Activated naive CD4-positive, alpha-beta T cell treated with anti-CD3 and anti-CD28 coated beads for 36 hours (primary cell): ENCODE measurements at regions of chr10 and their contacts with region 1.

Region 1: GRCh38 chr10:88657901-88658300 is 6.3 kb upstream of the LIPF start:
- DNase-seq: no peak
- H3K4me3 Mint-ChIP-seq: no peak overlapping the region
- H3K27ac Mint-ChIP-seq: no peak overlapping the region
- H3K4me1 Mint-ChIP-seq: no peaks in the 10 kb centered on the region
- H3K27me3 Mint-ChIP-seq: peaks cover 14% of the 10 kb centered on the region

Region 2: DNA sequence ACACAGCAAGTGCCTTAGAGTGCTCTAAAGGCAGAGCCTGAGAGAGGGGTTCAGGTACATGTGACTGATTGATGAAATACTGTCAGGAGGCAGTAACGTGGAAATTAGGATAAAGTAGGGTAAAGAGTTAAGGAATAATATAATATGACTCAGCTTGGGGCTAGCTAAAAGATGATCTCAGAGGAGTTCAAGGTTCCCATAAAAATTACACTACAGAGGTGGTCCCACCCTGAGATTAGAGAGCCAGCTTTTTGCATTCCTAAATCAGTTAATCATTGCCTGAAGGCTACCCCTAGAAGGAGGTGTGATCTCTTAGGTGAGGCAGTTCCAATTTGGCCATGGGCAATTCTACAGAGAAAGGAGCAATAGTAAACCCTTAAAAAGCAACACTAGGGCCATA is 65.5 kb before region 1 on chr10:
- CTCF ChIA-PET with region 1: no interaction called
- intact Hi-C with region 1: loop called (anchors 5 kb)
- DNase-seq: no peak
- H3K4me3 Mint-ChIP-seq: no peak overlapping the region
- H3K27ac Mint-ChIP-seq: no peak overlapping the region
- H3K4me1 Mint-ChIP-seq: no peaks in the 10 kb centered on the region
- H3K27me3 Mint-ChIP-seq: no peaks in the 10 kb centered on the region